ENCODE measurements at regions of chr11 and their contacts with region 1.

Region 1: GRCh38 chr11:121508449-121508848 is 55.7 kb upstream of the SORL1-AS1 start:
- DNase-seq: no peak
- ATAC-seq: no peak; the same call in 2 of the 3 replicates
- H3K4me3 ChIP-seq: no peak overlapping the region
- H3K27ac ChIP-seq: no peak overlapping the region
- H3K4me1 ChIP-seq: no peaks in the 10 kb centered on the region
- H3K27me3 ChIP-seq: no peaks in the 10 kb centered on the region
- CTCF ChIP-seq: no peak
- EP300 ChIP-seq: no peak
- POLR2A ChIP-seq: no peak
- RAD21 ChIP-seq: no peak

Region 2: GRCh38 chr11:121421159-121421901 is 87.1 kb before region 1 on chr11:
- CTCF ChIA-PET with region 1: no interaction called
- POLR2A ChIA-PET with region 1: no interaction called
- RAD21 ChIA-PET with region 1: no interaction called
- SMC1A ChIA-PET with region 1: no interaction called
- in situ Hi-C with region 1: no loop called
- intact Hi-C with region 1: no loop called
- DNase-seq: no peak
- ATAC-seq: peak; percentile 42
- H3K4me3 ChIP-seq: no peak overlapping the region
- H3K27ac ChIP-seq: peak overlapping the region; percentile 40
- H3K4me1 ChIP-seq: peaks cover 56% of the 10 kb centered on the region
- H3K27me3 ChIP-seq: no peaks in the 10 kb centered on the region
- CTCF ChIP-seq: no peak; a peak in 2 of 6 replicates
- EP300 ChIP-seq: no peak
- POLR2A ChIP-seq: no peak
- RAD21 ChIP-seq: peak; percentile 40; the same call in 1 of the 2 replicates

Region 3: GRCh38 chr11:121520243-121521144 is 12.0 kb after region 1 on chr11:
- CTCF ChIA-PET with region 1: interaction called, 3 read pairs
- POLR2A ChIA-PET with region 1: interaction called, 3 read pairs
- RAD21 ChIA-PET with region 1: interaction called, 4 read pairs
- SMC1A ChIA-PET with region 1: interaction called, 13 read pairs
- in situ Hi-C with region 1: no loop called
- intact Hi-C with region 1: no loop called
- DNase-seq: no peak
- ATAC-seq: no peak
- H3K4me3 ChIP-seq: no peak overlapping the region; the same call in 1 of the 2 replicates
- H3K27ac ChIP-seq: peak overlapping the region; percentile 30
- H3K4me1 ChIP-seq: peaks cover 22% of the 10 kb centered on the region
- H3K27me3 ChIP-seq: no peaks in the 10 kb centered on the region
- CTCF ChIP-seq: no peak
- EP300 ChIP-seq: no peak
- POLR2A ChIP-seq: no peak
- RAD21 ChIP-seq: no peak

Region 4: DNA sequence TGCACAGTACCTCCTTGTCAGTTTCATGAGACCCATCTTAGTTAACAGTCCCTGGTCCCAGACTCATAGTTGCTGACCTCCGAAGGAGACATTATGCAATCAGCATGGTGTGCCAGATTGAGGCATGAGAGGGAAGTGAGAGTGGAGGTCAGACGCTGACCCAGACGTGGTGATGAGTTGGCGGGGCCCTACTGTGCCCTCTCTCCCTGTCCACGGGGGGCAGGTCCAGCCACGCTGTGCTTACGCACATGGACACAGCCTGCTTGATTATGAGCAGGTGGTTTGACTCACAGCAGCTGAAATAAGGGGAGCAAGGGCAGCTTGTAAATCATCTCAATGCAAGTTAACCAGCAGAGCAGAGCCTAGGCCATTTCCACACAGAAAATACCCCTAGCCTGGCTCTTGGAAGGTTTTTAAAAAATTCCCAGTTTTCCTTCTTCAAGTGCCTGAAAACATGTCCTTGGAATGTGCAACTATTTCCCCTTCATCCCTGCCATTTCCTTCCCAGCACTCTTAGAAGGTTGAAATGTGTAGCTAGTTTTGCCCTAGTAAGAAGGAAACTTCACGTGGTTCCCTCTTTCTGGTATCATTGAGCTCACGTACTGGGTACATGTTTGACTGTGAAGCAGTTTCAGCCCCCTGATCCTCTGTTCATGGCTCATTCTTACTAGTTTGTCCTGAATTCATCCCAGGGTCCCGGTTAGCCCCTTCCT is 67.0 kb after region 1 on chr11:
- CTCF ChIA-PET with region 1: no interaction called
- POLR2A ChIA-PET with region 1: no interaction called
- RAD21 ChIA-PET with region 1: interaction called, 3 read pairs
- SMC1A ChIA-PET with region 1: interaction called, 10 read pairs
- in situ Hi-C with region 1: no loop called
- intact Hi-C with region 1: no loop called
- DNase-seq: peak; percentile 74
- ATAC-seq: peak; percentile 93
- H3K4me3 ChIP-seq: no peak overlapping the region
- H3K27ac ChIP-seq: peak overlapping the region; percentile 75
- H3K4me1 ChIP-seq: peaks cover 56% of the 10 kb centered on the region
- H3K27me3 ChIP-seq: no peaks in the 10 kb centered on the region
- CTCF ChIP-seq: no peak
- EP300 ChIP-seq: peak; percentile 86 to 91
- POLR2A ChIP-seq: no peak; the same call in 1 of the 2 replicates
- RAD21 ChIP-seq: no peak

Measured in GM12878 (cell line).